Activated CD4-positive, alpha-beta T cell treated with anti-CD3 and anti-CD28 coated beads, Interleukin-2, amount 10 ng/mL, durations not matched to agents 24 days and 14 days (primary cell): ENCODE measurements at regions of chr3 and their contacts with region 1.

Region 1: GRCh38 chr3:52897130-52898122 is at the start of gene STIMATE:
- DNase-seq: peak; percentile 97
- H3K4me3 Mint-ChIP-seq: peak within 1 kb of the TSS; percentile 94
- H3K27ac Mint-ChIP-seq: peak within 1 kb of the TSS; percentile 90
- H3K4me1 Mint-ChIP-seq: peaks cover 42% of the 10 kb centered on the region
- H3K27me3 Mint-ChIP-seq: no peaks in the 10 kb centered on the region
- total RNA-seq, gene STIMATE: 13.8 and 18.6 TPM in 2 replicates

Region 2: DNA sequence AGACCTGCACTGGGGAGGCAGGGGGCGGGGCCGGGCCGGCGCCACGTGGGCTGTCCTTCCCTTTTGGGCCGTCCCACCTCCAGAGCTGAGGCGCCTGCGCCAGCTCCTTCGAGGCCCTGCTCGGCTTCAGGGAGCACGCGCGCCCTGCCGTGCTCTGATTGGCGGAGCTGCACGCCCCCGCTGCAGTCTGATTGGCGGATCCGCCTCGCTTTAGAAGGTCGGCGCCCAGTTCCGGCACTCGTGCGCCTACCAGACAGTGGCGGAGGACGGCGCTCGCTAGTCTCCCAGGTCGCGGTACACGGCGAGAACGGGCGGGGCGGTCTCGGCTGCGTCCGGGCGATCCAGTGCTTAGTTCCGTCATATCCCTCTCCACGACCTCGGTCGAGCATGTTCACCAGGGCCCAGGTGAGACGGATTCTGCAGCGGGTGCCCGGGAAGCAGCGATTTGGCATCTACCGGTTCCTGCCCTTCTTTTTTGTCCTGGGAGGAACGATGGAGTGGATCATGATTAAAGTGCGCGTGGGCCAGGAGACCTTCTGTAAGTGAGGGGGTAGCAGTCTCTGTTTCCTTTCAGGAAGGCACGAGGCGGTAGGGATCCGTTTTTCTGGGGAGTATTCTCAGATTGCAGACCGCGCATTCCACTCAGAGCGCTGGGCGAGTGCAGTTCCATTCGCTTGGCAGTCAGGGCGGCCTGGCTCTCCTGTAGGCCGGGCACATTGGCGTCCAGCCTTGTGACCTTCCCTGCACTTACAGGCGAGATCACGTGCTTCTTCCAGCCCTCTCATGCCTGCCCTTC is 360.9 kb before region 1 on chr3 and contains the start of gene UQCC5:
- intact Hi-C with region 1: loop called (anchors 10 kb)
- DNase-seq: peak; percentile 99
- H3K4me3 Mint-ChIP-seq: peak within 1 kb of the TSS; percentile 98
- H3K27ac Mint-ChIP-seq: peak within 1 kb of the TSS; percentile 100
- H3K4me1 Mint-ChIP-seq: peaks cover 33% of the 10 kb centered on the region
- H3K27me3 Mint-ChIP-seq: no peaks in the 10 kb centered on the region
- total RNA-seq, gene UQCC5: 13.8 TPM in 2 replicates

Region 3: DNA sequence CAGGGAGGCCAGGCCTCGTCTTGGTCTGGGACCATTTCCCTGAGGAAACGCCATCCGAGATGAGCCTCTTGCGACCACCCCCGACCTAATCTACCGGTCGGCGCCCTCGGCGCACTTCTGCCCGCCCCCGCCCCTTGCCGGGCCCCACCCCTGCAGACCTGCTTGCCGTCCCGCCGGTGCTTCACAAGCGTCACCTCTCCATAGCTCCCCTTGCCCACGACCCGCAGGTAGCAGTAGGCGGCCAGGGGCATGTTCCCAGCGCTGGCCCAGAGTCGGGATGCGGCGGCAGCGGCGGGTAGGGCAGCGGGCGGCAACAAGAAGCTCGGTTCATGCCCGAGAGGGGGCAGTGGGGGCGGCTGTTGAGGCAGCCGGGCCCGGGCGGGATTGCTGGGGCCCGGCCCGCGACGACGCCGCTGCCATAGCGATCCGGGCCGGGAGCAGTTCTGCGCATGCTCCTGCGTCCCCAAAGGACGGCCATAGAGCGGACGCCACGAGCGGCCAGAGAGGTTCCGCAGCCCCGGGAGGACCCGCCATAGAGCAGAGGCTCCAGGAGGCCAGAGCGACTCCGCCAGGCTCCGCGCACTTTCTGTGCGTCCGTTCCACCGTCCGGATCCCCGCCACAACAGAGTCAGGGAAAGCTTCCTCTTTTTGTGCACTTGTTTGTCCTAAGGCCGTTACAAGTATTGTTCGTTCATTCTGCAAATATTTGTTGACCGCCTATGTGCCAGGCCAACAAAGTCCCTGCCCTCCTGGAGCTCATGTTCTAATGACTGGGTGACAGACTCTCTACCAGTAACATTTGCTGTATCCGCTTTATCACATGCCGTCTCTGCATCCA is 126.7 kb before region 1 on chr3 and contains the start of gene NEK4:
- intact Hi-C with region 1: loop called (anchors 5 kb)
- DNase-seq: peak; percentile 95
- H3K4me3 Mint-ChIP-seq: peak within 1 kb of the TSS; percentile 88
- H3K27ac Mint-ChIP-seq: peak within 1 kb of the TSS; percentile 94
- H3K4me1 Mint-ChIP-seq: peaks cover 19% of the 10 kb centered on the region
- H3K27me3 Mint-ChIP-seq: no peaks in the 10 kb centered on the region
- total RNA-seq, gene NEK4: 29.4 and 30.3 TPM in 2 replicates

Region 4: DNA sequence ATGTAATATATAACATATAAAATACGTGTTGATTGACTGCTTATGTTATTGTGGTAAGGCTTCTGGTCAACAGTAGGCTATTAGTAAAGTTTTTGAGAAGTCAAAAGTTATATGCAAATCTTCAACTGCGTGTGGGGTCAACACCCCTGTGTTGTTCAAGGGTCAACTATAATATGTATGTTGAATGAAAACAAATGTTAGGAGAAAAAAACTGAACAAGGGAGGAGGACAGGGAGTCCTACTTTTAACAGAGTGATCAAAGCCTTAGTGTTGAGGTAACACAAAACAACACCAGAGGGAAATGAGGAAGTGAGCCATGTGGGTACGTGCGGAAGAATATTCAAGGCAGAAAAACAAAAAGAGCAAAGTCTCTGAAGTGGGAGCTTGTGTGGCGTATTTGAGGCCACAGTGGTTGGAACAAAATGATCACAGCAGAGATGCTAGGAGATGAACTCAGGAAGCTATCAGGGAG is 85.9 kb after region 1 on chr3:
- intact Hi-C with region 1: loop called (anchors 1 kb)
- DNase-seq: peak; percentile 92
- H3K4me3 Mint-ChIP-seq: peak overlapping the region; percentile 68
- H3K27ac Mint-ChIP-seq: peak overlapping the region; percentile 84
- H3K4me1 Mint-ChIP-seq: peaks cover 29% of the 10 kb centered on the region
- H3K27me3 Mint-ChIP-seq: no peaks in the 10 kb centered on the region

Region 5: DNA sequence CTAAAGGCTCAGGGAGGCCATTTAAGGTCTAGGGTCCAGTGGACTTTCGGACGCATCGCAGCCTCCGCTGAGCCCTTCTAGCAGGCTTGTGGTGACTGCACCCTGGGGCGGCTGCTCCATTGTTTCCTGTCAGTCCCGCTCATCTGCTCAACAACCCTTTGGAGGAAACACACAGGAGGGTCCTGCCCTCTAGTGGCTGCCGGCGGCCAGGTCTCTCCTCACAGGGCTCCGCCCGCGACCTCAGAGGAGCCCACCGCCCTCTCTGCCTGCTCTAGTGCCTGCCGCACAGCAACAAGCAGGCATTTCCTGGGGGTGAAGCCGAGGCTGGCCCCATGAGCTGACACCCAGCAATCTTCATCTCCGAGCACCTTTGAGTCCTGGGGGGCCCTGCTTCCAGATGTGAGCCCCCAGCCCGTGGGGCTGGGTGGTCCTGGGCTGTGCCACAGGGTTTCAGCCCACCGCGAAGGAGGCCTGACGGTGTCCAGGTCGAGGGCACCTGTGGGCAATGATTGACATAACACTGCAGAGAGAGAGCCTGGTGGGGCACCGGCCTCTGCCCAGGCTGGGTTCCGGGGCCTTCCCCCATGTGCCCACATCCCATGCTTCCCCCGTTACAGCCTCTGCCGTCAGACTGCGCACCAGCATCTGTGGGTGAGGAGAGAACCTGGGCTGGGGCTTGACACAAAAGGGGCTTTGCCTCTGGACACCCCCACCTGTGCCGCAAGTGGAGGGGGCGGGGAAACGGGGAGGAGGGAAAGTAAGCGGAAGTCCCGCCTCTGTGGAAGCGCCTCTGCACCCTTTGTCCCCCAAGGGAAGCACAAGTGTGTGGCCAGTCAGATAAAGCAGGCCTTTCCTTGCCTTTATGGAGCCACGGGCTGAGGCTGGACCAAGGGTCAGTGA is 175.5 kb after region 1 on chr3:
- intact Hi-C with region 1: loop called (anchors 5 kb)
- DNase-seq: peak; percentile 97
- H3K4me3 Mint-ChIP-seq: peak overlapping the region; percentile 92
- H3K27ac Mint-ChIP-seq: peak overlapping the region; percentile 94
- H3K4me1 Mint-ChIP-seq: peaks cover 18% of the 10 kb centered on the region
- H3K27me3 Mint-ChIP-seq: no peaks in the 10 kb centered on the region